Gastrocnemius medialis (tissue), 4 donors: ENCODE measurements at regions of chr19 and their contacts with region 1.

Region 1: DNA sequence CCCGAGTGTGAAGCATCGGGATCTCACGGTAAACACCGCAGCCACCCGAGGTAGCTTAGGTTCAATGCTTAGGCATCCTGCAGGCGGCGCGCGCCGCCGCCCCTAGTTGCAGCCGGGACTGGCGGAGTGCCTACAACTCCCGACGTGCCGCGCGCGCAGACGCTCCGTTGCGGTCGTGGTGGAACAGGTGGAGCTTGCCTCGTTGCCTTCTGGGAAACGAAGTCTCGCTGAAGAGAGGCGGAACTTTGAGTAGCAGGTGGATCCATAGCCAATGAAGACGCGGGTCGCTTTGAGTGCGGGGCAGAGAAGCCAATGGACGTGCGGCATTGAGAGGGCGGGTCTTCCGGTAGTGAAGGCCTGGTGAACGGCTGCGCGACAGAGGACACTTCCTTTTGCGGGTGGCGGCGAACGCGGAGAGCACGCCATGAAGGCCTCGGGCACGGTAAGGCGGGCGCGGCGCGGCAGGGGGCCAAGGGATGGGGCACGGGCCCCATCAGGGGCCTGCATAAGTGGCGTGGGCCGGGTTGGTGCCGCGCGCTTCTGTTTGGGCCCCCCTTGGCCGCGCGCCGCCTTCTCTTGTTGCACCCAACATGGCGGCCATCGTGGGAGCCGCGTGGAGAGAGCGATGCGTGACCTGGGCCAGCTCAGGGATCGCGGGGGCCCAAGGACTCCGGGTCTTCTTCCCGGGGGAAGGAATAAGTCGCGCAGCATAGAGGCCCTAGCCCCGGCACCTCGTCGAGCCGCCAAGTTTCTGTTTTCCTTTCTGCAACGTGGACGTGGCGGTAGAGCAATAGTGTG is at the start of gene RPL18A:
- DNase-seq: peak; percentile 99
- ATAC-seq: peak; percentile 98 to 99
- H3K4me3 ChIP-seq: peak within 1 kb of the TSS; percentile 91 to 100 (median 94)
- H3K27ac ChIP-seq: peak within 1 kb of the TSS; percentile 87 to 96 (median 94)
- H3K4me1 ChIP-seq: peaks cover 21 to 35% of the 10 kb centered on the region in 2 donors
- H3K27me3 ChIP-seq: no peaks in the 10 kb centered on the region
- CTCF ChIP-seq: peak; percentile 77 to 88 (median 83)
- POLR2A ChIP-seq: peak; percentile 97
- total RNA-seq, gene RPL18A: 1,094 to 1,320 (median 1,226) TPM

Region 2: GRCh38 chr19:17703824-17704463 is 155.8 kb before region 1 on chr19:
- in situ Hi-C with region 1: no loop called
- intact Hi-C with region 1: loop called (anchors 10 kb)
- DNase-seq: no peak
- ATAC-seq: no peak
- H3K4me3 ChIP-seq: no peak overlapping the region
- H3K27ac ChIP-seq: no peak overlapping the region
- H3K4me1 ChIP-seq: no peaks in the 10 kb centered on the region
- H3K27me3 ChIP-seq: peaks cover 0 to 11% (median 11%) of the 10 kb centered on the region in 3 donors
- CTCF ChIP-seq: peak; percentile 33 to 73 (median 56)
- POLR2A ChIP-seq: no peak

Region 3: DNA sequence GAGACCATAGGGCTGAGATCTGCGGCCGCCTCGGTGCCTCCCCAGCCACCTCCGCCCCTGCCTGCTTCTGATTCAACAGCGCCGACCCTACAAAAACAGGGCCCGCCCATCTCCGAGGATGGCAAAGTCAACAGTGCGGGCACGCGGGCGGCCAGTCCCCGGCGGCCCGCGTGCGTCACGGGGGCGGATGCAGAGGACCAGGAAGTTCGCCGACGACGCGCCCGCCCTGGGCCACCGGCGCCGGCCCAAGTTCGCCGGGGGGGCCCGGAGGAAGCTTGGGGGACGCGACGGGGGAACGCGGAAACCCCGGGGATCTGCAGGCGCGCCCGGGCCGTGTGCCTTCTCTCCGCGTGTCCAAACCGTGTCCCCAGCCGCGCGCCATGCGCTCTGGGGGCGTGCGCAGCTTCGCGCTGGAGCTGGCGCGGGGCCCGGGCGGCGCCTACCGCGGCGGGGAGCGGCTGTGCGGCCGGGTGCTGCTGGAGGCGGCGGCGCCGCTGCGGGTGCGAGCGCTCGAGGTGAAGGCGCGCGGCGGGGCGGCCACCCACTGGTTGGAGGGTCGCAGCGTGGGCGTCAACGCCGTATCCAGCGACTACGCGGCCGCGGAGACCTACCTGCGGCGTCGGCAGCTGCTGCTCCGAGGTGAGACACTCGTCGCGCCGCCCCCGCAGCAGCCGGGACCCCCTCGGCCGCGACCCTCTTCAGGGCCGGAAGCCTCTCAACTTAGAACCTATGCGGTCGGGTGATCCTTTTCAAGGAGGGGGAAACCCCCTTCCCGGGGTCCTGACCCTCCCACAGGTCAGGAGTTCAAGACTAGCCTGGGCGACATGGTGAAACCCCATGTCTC is 141.4 kb after region 1 on chr19:
- in situ Hi-C with region 1: loop called in 2 of 4 experiments (anchors 10 to 25 kb)
- intact Hi-C with region 1: loop called (anchors 1 kb)
- DNase-seq: peak; percentile 73 to 78
- ATAC-seq: peak; percentile 61 to 68
- H3K4me3 ChIP-seq: peak overlapping the region; percentile 58 to 64 (median 60)
- H3K27ac ChIP-seq: peak overlapping the region; percentile 82 to 83 (median 82)
- H3K4me1 ChIP-seq: peaks cover 0 to 5% of the 10 kb centered on the region in 2 donors
- H3K27me3 ChIP-seq: peaks cover 0 to 12% (median 6%) of the 10 kb centered on the region in 3 donors
- CTCF ChIP-seq: peak in 1 of 5 experiments; percentile 14
- POLR2A ChIP-seq: peak; percentile 68 to 81